ENCODE measurements at regions of chr1 and their contacts with region 1.

Region 1: DNA sequence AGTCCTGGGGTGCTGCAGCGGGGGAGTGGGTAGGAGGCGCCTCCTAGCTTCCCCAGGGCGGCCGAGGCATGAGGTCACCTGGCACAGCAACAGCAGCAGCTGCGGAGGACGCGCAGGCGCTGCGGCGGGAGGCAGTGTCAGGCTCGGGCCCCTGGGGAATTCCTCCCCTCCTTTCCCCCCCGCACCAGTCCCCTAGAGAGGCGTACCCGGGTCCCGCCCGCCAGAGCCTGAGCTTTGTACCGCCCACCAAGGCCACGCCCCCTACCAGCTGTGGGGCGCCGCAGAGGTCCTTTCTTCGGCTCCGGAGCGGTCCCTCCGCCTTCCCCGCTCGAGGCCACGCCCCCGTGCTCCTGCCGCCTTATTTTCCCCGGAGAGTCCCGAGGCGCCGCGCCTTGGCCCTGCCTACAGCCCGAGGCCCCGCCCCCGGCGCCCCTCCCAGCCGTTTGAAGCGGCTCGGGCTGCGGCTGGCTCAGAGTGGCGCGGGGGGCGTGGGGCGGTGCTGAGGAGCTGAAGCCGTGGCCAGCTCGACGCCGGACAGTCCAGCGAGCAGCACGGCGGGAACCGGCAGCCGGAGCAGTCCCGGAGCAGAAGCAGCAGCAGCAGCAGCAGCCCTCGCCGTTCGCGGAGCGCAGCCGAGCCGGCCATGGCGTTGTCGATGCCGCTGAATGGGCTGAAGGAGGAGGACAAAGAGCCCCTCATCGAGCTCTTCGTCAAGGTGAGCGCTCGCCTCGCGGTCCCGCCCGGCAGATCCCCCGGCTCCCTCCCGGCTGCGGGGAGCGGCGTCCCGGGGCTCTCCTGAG is at the start of gene CLIC4:
- DNase-seq: peak; percentile 100
- H3K4me3 Mint-ChIP-seq: peak within 1 kb of the TSS; percentile 91
- H3K27ac Mint-ChIP-seq: peak within 1 kb of the TSS; percentile 84
- H3K4me1 Mint-ChIP-seq: peaks cover 51% of the 10 kb centered on the region
- H3K27me3 Mint-ChIP-seq: no peaks in the 10 kb centered on the region
- total RNA-seq, gene CLIC4: 17.9 and 18.2 TPM in 2 replicates

Region 2: GRCh38 chr1:24694380-24694843 is 50.7 kb before region 1 on chr1:
- intact Hi-C with region 1: loop called (anchors 10 kb)
- DNase-seq: no peak
- H3K4me3 Mint-ChIP-seq: no peak overlapping the region
- H3K27ac Mint-ChIP-seq: no peak overlapping the region
- H3K4me1 Mint-ChIP-seq: peaks cover 15% of the 10 kb centered on the region
- H3K27me3 Mint-ChIP-seq: peaks cover 3% of the 10 kb centered on the region